Mammary epithelial cell (primary cell): ENCODE measurements at regions of chr3 and their contacts with region 1.

Region 1: GRCh38 chr3:93973131-93974126 is at the start of gene PROS1:
- DNase-seq: peak; percentile 63
- H3K4me3 ChIP-seq: peak within 1 kb of the TSS; percentile 65 to 73 (median 65)
- H3K27ac ChIP-seq: peak within 1 kb of the TSS; percentile 47
- H3K4me1 ChIP-seq: peaks cover 21% of the 10 kb centered on the region
- H3K27me3 ChIP-seq: no peaks in the 10 kb centered on the region
- CTCF ChIP-seq: peak in 1 of 2 donors; percentile 9
- total RNA-seq, gene PROS1: 9.6 to 80.2 TPM

Region 2: DNA sequence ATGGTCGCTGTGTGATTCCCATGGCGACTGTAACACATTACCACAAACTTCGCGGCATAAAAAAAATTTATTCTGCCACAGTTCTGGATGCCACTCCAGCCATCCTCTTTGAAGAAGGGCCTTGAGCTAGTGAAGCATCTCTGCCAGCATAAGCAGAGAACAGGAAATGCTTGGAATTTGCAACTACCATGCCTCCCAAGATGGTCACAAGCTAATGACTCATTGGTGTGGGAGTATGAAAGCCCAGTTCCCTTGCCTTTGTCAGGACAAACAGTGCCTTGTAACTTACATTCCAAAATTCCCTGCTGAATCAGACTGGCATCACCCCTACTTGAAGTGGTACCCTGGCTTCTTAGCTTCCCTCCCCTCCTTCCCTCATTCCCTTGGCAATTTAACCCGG is 129.4 kb before region 1 on chr3:
- CTCF ChIA-PET with region 1: no interaction called
- dilution Hi-C with region 1: no loop called
- in situ Hi-C with region 1: no loop called
- intact Hi-C with region 1: loop called (anchors 5 kb)
- DNase-seq: peak; percentile 94
- H3K4me3 ChIP-seq: no peak overlapping the region
- H3K27ac ChIP-seq: peak overlapping the region; percentile 55
- H3K4me1 ChIP-seq: peaks cover 4% of the 10 kb centered on the region
- H3K27me3 ChIP-seq: no peaks in the 10 kb centered on the region
- CTCF ChIP-seq: no peak

Region 3: DNA sequence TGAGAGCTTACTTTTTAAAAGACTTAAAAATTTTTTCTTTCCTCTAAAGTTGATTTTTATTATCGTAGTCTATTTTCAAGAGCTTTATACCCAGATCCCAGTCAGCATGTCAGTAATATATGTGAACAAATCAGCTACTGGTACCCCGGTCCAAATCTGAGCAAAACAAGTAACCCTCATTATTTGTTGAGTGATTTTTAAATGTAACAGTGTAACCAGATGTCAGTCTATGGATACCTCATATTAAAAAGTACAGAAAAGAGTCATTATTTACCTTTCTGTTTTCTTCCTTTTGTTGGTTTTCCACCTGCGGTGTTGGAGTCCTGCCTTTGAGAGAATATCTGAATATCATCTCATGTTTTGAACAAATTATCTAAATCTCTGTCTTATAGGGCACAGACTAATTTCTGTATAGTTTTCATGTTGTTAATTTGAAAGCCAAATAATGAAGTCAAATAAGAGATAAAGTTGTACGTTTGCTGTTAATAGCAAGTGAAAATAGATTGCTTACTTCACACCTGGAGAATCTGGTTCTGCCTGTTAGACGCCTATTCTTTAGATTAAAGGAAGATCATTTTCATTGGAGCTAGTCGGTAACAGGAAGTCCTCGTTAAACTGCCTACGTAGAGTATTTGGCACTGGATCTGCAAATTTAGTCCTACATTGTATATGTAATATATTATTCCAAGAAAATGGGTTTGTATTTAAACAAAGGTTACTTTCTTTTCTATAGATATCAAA is 54.8 kb after region 1 on chr3 and contains the start of gene STX19:
- CTCF ChIA-PET with region 1: no interaction called
- dilution Hi-C with region 1: no loop called
- in situ Hi-C with region 1: no loop called
- intact Hi-C with region 1: no loop called
- DNase-seq: peak; percentile 20
- H3K4me3 ChIP-seq: peak within 1 kb of the TSS; percentile 18 to 30 (median 27)
- H3K27ac ChIP-seq: no peak within 1 kb of the TSS
- H3K4me1 ChIP-seq: peaks cover 8% of the 10 kb centered on the region
- H3K27me3 ChIP-seq: no peaks in the 10 kb centered on the region
- CTCF ChIP-seq: no peak
- total RNA-seq, gene STX19: not detected